ENCODE measurements at regions of chr12 and their contacts with region 1.

Region 1: GRCh38 chr12:10190558-10191388 is 11.9 kb downstream of the TMEM52B start:
- DNase-seq: peak; percentile 77
- ATAC-seq: peak; percentile 87
- H3K4me3 ChIP-seq: no peak overlapping the region
- H3K27ac ChIP-seq: peak overlapping the region; percentile 34; the same call in 1 of the 2 replicates
- H3K4me1 ChIP-seq: peaks cover 12% of the 10 kb centered on the region
- H3K27me3 ChIP-seq: no peaks in the 10 kb centered on the region
- CTCF ChIP-seq: peak; percentile 85
- POLR2A ChIP-seq: no peak
- RAD21 ChIP-seq: peak; percentile 87

Region 2: GRCh38 chr12:10033783-10034545 is 156.8 kb before region 1 on chr12:
- CTCF ChIA-PET with region 1: interaction called, 3 read pairs
- POLR2A ChIA-PET with region 1: interaction called, 6 read pairs
- dilution Hi-C with region 1: no loop called
- in situ Hi-C with region 1: no loop called
- intact Hi-C with region 1: loop called (anchors 2 kb)
- DNase-seq: peak; percentile 18
- ATAC-seq: peak; percentile 50
- H3K4me3 ChIP-seq: no peak overlapping the region
- H3K27ac ChIP-seq: no peak overlapping the region
- H3K4me1 ChIP-seq: no peaks in the 10 kb centered on the region
- H3K27me3 ChIP-seq: no peaks in the 10 kb centered on the region
- CTCF ChIP-seq: peak; percentile 72
- POLR2A ChIP-seq: no peak
- RAD21 ChIP-seq: peak; percentile 72

Region 3: GRCh38 chr12:10153271-10154144 is 37.3 kb before region 1 on chr12:
- CTCF ChIA-PET with region 1: interaction called, 31 read pairs
- POLR2A ChIA-PET with region 1: no interaction called
- dilution Hi-C with region 1: no loop called
- in situ Hi-C with region 1: loop called (anchors 5 kb)
- intact Hi-C with region 1: loop called (anchors 1 kb)
- DNase-seq: peak; percentile 63
- ATAC-seq: peak; percentile 95
- H3K4me3 ChIP-seq: peak overlapping the region; percentile 37
- H3K27ac ChIP-seq: peak overlapping the region; percentile 68
- H3K4me1 ChIP-seq: peaks cover 8% of the 10 kb centered on the region
- H3K27me3 ChIP-seq: no peaks in the 10 kb centered on the region
- CTCF ChIP-seq: peak; percentile 75
- POLR2A ChIP-seq: no peak
- RAD21 ChIP-seq: peak; percentile 77

Measured in IMR-90 (cell line).